Activated naive CD4-positive, alpha-beta T cell treated with anti-CD3 and anti-CD28 coated beads for 36 hours (primary cell): ENCODE measurements at regions of chr2 and their contacts with region 1.

Region 1: DNA sequence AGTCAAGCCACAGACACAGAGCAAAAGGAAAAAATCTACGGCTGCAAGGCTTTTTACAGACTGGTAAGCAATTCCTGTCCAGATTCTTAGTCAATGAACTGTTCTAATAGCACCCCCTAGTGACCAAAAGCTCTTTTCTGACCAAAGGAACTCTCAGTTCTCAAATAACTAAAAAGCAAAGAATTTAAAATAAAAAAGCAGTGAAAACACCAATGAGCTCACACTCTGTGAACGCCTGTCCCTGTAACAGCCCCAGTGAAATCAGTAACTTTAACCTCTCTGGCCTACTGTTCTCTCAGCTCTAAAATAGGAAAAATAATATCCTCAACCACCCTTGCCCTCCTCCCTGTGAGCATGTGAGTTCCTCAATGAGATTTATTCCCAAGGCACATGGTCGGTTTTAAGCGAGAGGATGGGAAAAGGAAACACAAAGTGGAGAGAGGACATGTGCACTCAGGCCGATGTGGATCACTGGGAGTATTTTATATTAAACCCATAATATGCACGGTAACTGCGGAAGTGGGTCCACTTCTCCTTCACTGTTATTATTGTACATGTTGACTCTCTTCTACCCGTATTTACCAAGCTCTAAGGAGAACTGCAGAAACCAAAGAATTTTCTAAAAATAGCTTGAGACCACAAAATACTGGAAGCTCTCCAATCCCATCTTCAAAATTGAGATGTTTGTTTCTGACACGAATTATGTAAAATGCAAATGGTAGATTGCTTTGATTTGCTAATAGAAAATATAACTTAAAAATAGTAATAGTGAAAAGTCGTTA is 128.5 kb downstream of the STK39 start:
- DNase-seq: peak; percentile 7
- H3K4me3 Mint-ChIP-seq: no peak overlapping the region
- H3K27ac Mint-ChIP-seq: no peak overlapping the region
- H3K4me1 Mint-ChIP-seq: no peaks in the 10 kb centered on the region
- H3K27me3 Mint-ChIP-seq: no peaks in the 10 kb centered on the region

Region 2: GRCh38 chr2:167292430-167293171 is 826.3 kb before region 1 on chr2:
- CTCF ChIA-PET with region 1: no interaction called
- intact Hi-C with region 1: loop called (anchors 2 kb)
- DNase-seq: peak; percentile 76
- H3K4me3 Mint-ChIP-seq: peak within 1 kb of the TSS; percentile 75
- H3K27ac Mint-ChIP-seq: no peak within 1 kb of the TSS
- H3K4me1 Mint-ChIP-seq: peaks cover 12% of the 10 kb centered on the region
- H3K27me3 Mint-ChIP-seq: peaks cover 38% of the 10 kb centered on the region

Region 3: DNA sequence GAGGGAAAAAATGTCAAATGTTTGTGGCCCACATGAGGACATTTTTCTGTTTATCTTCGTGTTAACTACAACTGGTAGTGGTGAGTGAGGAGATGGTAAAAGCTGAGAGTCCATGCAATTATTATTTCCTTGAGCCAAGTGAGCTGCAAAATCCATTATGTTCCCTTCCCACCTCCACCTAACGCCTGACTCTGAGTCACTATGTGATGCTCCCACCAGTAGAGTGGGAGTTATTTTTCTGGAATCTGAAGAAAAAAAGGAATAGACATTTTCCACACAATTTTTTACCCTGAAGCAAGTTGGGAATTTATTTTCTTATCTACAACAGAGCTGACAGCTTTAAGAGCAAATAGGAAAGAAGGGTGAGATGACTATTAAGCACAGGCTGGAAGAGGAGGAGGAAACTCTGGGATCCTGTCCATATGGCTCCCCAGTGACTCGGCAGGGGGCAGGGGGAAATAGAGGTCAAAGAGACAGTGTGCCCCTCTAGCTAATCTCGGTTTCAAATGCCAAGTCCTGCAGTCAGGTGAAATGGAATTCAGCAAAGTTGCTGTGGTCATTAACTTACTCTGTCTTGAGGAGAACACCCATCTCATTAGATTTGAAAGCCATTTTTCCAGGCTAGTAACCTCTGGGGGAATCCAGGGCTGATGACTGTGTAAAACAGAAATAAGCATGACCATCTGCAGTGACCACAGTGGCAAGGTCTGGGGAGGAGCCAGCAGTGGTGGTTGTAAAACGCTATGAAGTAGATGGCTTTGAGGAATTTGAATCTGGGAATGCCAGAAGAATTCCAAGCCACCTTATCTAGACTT is 335.5 kb before region 1 on chr2:
- CTCF ChIA-PET with region 1: no interaction called
- intact Hi-C with region 1: loop called (anchors 10 kb)
- DNase-seq: no peak
- H3K4me3 Mint-ChIP-seq: no peak overlapping the region
- H3K27ac Mint-ChIP-seq: no peak overlapping the region
- H3K4me1 Mint-ChIP-seq: no peaks in the 10 kb centered on the region
- H3K27me3 Mint-ChIP-seq: no peaks in the 10 kb centered on the region

Region 4: GRCh38 chr2:167964650-167965413 is 154.1 kb before region 1 on chr2:
- CTCF ChIA-PET with region 1: interaction called, 20 read pairs
- intact Hi-C with region 1: loop called (anchors 1 kb)
- DNase-seq: no peak
- H3K4me3 Mint-ChIP-seq: no peak overlapping the region
- H3K27ac Mint-ChIP-seq: no peak overlapping the region
- H3K4me1 Mint-ChIP-seq: peaks cover 5% of the 10 kb centered on the region
- H3K27me3 Mint-ChIP-seq: no peaks in the 10 kb centered on the region

Region 5: GRCh38 chr2:168336864-168337263 is 217.9 kb after region 1 on chr2:
- CTCF ChIA-PET with region 1: interaction called, 11 read pairs
- intact Hi-C with region 1: no loop called
- DNase-seq: peak; percentile 80
- H3K4me3 Mint-ChIP-seq: no peak overlapping the region
- H3K27ac Mint-ChIP-seq: no peak overlapping the region
- H3K4me1 Mint-ChIP-seq: peaks cover 7% of the 10 kb centered on the region
- H3K27me3 Mint-ChIP-seq: no peaks in the 10 kb centered on the region

Region 6: GRCh38 chr2:168545439-168546082 is 426.6 kb after region 1 on chr2:
- CTCF ChIA-PET with region 1: no interaction called
- intact Hi-C with region 1: no loop called
- DNase-seq: no peak
- H3K4me3 Mint-ChIP-seq: no peak overlapping the region
- H3K27ac Mint-ChIP-seq: no peak overlapping the region
- H3K4me1 Mint-ChIP-seq: peaks cover 38% of the 10 kb centered on the region
- H3K27me3 Mint-ChIP-seq: no peaks in the 10 kb centered on the region